Activated CD8-positive, alpha-beta T cell treated with anti-CD3 and anti-CD28 coated beads for 36 hours (primary cell): ENCODE measurements at regions of chr3 and their contacts with region 1.

Region 1: GRCh38 chr3:4986782-4987537 is 7.7 kb downstream of the BHLHE40 start:
- DNase-seq: peak; percentile 91
- ATAC-seq: peak; percentile 67
- H3K4me3 Mint-ChIP-seq: peak overlapping the region; percentile 92
- H3K27ac Mint-ChIP-seq: peak overlapping the region; percentile 88
- H3K4me1 Mint-ChIP-seq: peaks cover 63% of the 10 kb centered on the region
- H3K27me3 Mint-ChIP-seq: no peaks in the 10 kb centered on the region
- CTCF ChIP-seq: no peak

Region 2: DNA sequence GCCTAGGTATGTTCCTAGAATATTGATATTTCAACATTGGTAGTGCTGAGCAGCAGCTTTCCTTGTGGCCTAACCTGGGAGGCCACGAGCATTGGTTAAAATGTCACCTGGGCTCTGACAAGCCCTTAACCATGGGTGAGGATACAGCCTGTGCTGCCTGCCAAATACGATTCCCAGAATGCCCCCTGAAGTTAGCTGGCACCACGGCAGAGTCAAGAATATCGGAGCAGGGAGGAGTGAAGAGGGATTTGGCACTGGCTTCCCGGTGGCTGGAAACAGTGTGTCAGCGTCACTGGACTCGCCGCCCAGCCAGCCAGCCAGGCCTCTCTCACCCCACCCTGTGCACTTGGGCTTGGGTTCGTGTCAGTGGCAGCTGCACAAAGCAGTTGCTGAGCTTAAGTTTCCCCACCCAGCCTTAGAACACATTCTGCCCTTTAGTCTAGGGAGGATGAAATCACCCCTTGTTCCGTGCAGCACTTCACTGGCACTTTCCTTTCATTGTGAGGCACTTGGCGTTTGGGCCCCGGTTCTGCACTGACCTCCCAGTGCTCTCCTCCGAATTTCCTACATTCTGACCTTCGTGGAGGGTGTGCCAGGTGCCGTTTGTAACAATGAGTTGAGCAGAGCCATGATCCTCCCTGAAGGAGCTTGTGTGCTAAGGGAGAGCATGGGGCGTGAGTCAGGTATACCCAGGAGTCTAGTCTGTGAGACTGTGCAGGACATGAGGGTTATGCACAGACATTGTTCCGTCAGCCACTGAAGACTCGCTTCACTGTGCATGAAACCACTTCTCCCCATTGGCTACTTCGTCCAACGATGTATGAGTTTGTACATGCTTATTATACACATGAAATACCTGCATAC is 160.5 kb before region 1 on chr3:
- CTCF ChIA-PET with region 1: interaction called, 5 read pairs
- POLR2A ChIA-PET with region 1: interaction called, 434 read pairs
- intact Hi-C with region 1: loop called (anchors 2 kb)
- DNase-seq: no peak
- ATAC-seq: no peak
- H3K4me3 Mint-ChIP-seq: peak overlapping the region; percentile 68
- H3K27ac Mint-ChIP-seq: peak overlapping the region; percentile 100
- H3K4me1 Mint-ChIP-seq: peaks cover 95% of the 10 kb centered on the region
- H3K27me3 Mint-ChIP-seq: no peaks in the 10 kb centered on the region
- CTCF ChIP-seq: no peak

Region 3: GRCh38 chr3:5006755-5007202 is 19.8 kb after region 1 on chr3:
- CTCF ChIA-PET with region 1: interaction called, 15 read pairs
- POLR2A ChIA-PET with region 1: interaction called, 81 read pairs
- intact Hi-C with region 1: no loop called
- DNase-seq: peak; percentile 93
- ATAC-seq: peak; percentile 82
- H3K4me3 Mint-ChIP-seq: peak overlapping the region; percentile 37
- H3K27ac Mint-ChIP-seq: peak overlapping the region; percentile 96
- H3K4me1 Mint-ChIP-seq: peaks cover 69% of the 10 kb centered on the region
- H3K27me3 Mint-ChIP-seq: peaks cover 1% of the 10 kb centered on the region
- CTCF ChIP-seq: no peak

Region 4: DNA sequence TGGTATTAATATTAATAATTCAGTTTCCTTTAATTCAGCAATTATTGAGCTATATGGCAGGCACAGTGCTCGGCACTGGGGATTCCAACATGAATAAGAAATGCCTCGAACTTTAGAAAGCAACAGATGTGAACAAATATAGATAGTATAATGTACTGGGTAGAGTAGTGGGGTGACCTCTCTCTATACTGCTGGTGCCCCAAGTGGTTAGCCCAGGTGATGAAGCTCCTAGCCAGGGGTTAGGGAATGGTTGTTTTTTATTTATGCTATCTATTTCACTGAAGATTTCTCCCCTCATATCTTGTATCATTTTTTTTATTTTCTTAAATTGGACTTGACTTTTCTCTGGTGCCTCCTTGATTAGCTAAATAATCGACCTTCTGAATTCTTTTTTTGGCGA is 54.4 kb after region 1 on chr3:
- CTCF ChIA-PET with region 1: interaction called, 17 read pairs
- POLR2A ChIA-PET with region 1: interaction called, 21 read pairs
- intact Hi-C with region 1: no loop called
- DNase-seq: no peak
- ATAC-seq: no peak
- H3K4me3 Mint-ChIP-seq: no peak overlapping the region
- H3K27ac Mint-ChIP-seq: no peak overlapping the region
- H3K4me1 Mint-ChIP-seq: peaks cover 26% of the 10 kb centered on the region
- H3K27me3 Mint-ChIP-seq: peaks cover 1% of the 10 kb centered on the region
- CTCF ChIP-seq: no peak

Region 5: GRCh38 chr3:5098346-5098745 is 111.4 kb after region 1 on chr3:
- CTCF ChIA-PET with region 1: no interaction called
- POLR2A ChIA-PET with region 1: no interaction called
- intact Hi-C with region 1: no loop called
- DNase-seq: no peak
- ATAC-seq: no peak
- H3K4me3 Mint-ChIP-seq: no peak overlapping the region
- H3K27ac Mint-ChIP-seq: no peak overlapping the region
- H3K4me1 Mint-ChIP-seq: peaks cover 3% of the 10 kb centered on the region
- H3K27me3 Mint-ChIP-seq: peaks cover 15% of the 10 kb centered on the region
- CTCF ChIP-seq: no peak